Kidney (tissue), 22 donors: ENCODE measurements at regions of chr2 and their contacts with region 1.

Region 1: GRCh38 chr2:17667898-17668297 is 85.7 kb downstream of the SMC6 start:
- DNase-seq: no peak
- H3K4me3 ChIP-seq: no peak overlapping the region
- H3K27ac ChIP-seq: no peak overlapping the region
- H3K4me1 ChIP-seq: no peaks in the 10 kb centered on the region
- H3K27me3 ChIP-seq: no peaks in the 10 kb centered on the region
- CTCF ChIP-seq: no peak

Region 2: GRCh38 chr2:16773080-16773713 is 894.7 kb before region 1 on chr2:
- intact Hi-C with region 1: loop called (anchors 10 kb)
- DNase-seq: peak in 4 of 5 donors; percentile 41 to 77 (median 61)
- H3K4me3 ChIP-seq: no peak overlapping the region
- H3K27ac ChIP-seq: no peak overlapping the region
- H3K4me1 ChIP-seq: no peaks in the 10 kb centered on the region
- H3K27me3 ChIP-seq: no peaks in the 10 kb centered on the region
- CTCF ChIP-seq: peak; percentile 52